Activated CD4-positive, alpha-beta memory T cell treated with anti-CD3 and anti-CD28 coated beads for 36 hours (primary cell): ENCODE measurements at regions of chr7 and their contacts with region 1.

Region 1: GRCh38 chr7:107666790-107667189 is 6.2 kb downstream of the SLC26A4 start:
- DNase-seq: no peak
- H3K4me3 Mint-ChIP-seq: no peak overlapping the region
- H3K27ac Mint-ChIP-seq: no peak overlapping the region
- H3K4me1 Mint-ChIP-seq: peaks cover 16% of the 10 kb centered on the region
- H3K27me3 Mint-ChIP-seq: peaks cover 11% of the 10 kb centered on the region

Region 2: DNA sequence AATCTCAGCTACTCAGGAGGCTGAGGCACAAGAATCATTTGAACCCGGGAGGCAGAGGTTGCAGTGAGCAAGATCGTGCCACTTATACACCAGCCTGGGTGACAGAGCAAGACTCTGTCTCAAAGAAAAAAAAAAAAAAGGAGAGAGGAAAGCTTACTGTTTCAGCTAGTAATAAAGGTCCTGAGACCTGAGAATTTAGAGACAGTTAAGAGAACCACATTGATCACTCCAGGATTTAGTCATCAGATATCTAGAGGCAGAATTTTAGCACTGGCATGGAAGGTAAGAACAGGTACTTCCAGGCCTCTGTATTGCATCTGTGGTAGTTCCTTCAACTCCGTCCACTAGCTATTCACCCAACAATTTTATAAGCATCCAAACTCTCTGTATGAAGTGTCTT is 110.9 kb before region 1 on chr7:
- CTCF ChIA-PET with region 1: no interaction called
- POLR2A ChIA-PET with region 1: no interaction called
- intact Hi-C with region 1: no loop called
- DNase-seq: no peak
- H3K4me3 Mint-ChIP-seq: no peak overlapping the region
- H3K27ac Mint-ChIP-seq: no peak overlapping the region
- H3K4me1 Mint-ChIP-seq: peaks cover 50% of the 10 kb centered on the region
- H3K27me3 Mint-ChIP-seq: no peaks in the 10 kb centered on the region

Region 3: DNA sequence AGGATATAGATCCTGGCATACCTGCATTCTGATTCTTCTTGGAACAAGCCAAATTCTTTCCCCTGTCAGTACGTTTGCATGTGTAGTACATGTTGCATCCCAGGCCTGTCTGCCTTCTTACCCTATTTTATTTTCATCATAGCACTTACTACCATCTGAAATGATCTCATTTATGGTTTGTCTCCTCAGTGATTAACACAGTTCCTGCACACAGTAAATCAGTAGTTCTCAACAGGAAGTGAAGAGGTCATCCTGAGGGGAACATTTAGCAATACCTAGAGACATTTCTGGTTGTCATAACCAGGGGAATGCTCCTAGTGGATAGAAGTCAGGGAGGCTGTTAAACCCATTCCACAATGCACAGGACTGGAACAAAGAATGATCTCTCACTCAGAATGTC is 44.4 kb before region 1 on chr7:
- CTCF ChIA-PET with region 1: no interaction called
- POLR2A ChIA-PET with region 1: no interaction called
- intact Hi-C with region 1: loop called (anchors 1 kb)
- DNase-seq: no peak
- H3K4me3 Mint-ChIP-seq: no peak overlapping the region
- H3K27ac Mint-ChIP-seq: no peak overlapping the region
- H3K4me1 Mint-ChIP-seq: no peaks in the 10 kb centered on the region
- H3K27me3 Mint-ChIP-seq: no peaks in the 10 kb centered on the region